Left cardiac atrium (tissue), 4 donors: ENCODE measurements at regions of chr3 and their contacts with region 1.

Region 1: GRCh38 chr3:126357295-126358037 is at the start of gene KLF15:
- DNase-seq: peak; percentile 90
- ATAC-seq: peak; percentile 77 to 85
- total RNA-seq, gene KLF15: 23.8 to 32.4 TPM

Region 2: GRCh38 chr3:126269354-126269753 is 88.1 kb before region 1 on chr3:
- intact Hi-C with region 1: loop called in 1 of 2 experiments (anchors 2 kb)
- DNase-seq: no peak
- ATAC-seq: no peak

Region 3: DNA sequence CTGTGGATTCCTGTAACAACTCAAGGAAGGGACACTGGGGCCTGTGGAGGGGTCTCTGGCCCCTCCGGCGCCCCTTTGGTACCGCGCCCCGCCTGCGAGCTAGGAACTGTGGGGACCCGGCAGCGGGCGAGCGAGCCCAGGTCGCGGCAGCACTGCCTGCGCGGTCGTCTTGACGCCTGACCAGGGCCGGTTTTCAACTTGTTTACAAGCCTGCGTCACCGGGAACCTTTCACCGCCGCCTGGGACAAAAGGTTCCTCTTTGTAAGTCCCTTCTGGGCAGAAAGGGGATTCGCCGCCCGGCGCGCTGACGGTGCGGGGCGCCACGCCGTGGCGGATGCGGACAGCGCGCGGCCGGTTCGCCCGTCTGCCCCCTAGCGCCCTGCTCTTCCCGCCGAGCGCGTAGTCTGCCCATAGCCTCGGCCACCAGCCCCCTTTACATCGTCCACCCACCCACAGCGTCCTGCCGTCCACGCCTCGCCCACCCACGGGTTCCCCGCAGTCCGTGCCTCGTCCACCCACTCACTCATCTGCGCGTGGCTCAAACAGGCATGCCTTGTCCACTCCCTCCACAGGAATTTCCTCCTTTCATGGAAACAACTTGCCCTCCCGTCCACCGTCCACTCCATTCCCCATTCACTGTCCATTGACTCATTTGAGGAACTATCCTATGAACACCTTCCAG is 31.8 kb after region 1 on chr3:
- intact Hi-C with region 1: loop called in 1 of 2 experiments (anchors 2 kb)
- DNase-seq: peak; percentile 95
- ATAC-seq: peak; percentile 94 to 98

Region 4: GRCh38 chr3:126508539-126508938 is 151.1 kb after region 1 on chr3:
- intact Hi-C with region 1: no loop called
- DNase-seq: peak; percentile 15
- ATAC-seq: no peak